ENCODE measurements at regions of chr11 and their contacts with region 1.

Region 1: GRCh38 chr11:37788141-37788877 is 1190.3 kb upstream of the RAG2 start:
- DNase-seq: peak; percentile 95
- H3K4me3 ChIP-seq: no peak overlapping the region
- H3K27ac ChIP-seq: peak overlapping the region; percentile 92
- H3K4me1 ChIP-seq: peaks cover 22% of the 10 kb centered on the region
- H3K27me3 ChIP-seq: no peaks in the 10 kb centered on the region
- CTCF ChIP-seq: no peak
- POLR2A ChIP-seq: no peak

Region 2: DNA sequence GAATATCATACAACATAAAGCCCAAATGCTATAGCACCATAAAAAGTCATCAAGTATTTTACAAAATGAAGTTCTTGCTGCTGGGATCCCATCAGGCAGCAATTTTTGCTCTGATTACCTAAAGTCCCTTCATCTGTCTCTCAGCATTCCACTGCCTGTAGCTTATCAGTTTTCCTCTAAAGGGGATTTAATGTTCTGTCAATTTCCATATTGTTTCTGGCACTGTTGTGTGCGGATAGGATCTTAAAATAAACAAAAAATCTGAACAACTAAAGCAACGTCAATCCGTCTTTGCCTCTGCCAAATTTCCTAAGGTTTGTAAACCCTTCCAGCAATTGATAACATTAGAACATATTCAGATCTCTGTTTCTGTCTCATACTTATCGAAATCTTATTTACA is 64.0 kb before region 1 on chr11:
- CTCF ChIA-PET with region 1: no interaction called
- POLR2A ChIA-PET with region 1: no interaction called
- dilution Hi-C with region 1: no loop called
- intact Hi-C with region 1: loop called (anchors 1 kb)
- DNase-seq: peak; percentile 72
- H3K4me3 ChIP-seq: no peak overlapping the region
- H3K27ac ChIP-seq: no peak overlapping the region
- H3K4me1 ChIP-seq: peaks cover 24% of the 10 kb centered on the region
- H3K27me3 ChIP-seq: no peaks in the 10 kb centered on the region
- CTCF ChIP-seq: no peak
- POLR2A ChIP-seq: no peak

Measured in endothelial cell of umbilical vein (primary cell).